ENCODE measurements at regions of chr3 and their contacts with region 1.

Region 1: GRCh38 chr3:175238801-175239200 is 379.7 kb downstream of the NAALADL2 start:
- DNase-seq: no peak
- CTCF ChIP-seq: no peak

Region 2: DNA sequence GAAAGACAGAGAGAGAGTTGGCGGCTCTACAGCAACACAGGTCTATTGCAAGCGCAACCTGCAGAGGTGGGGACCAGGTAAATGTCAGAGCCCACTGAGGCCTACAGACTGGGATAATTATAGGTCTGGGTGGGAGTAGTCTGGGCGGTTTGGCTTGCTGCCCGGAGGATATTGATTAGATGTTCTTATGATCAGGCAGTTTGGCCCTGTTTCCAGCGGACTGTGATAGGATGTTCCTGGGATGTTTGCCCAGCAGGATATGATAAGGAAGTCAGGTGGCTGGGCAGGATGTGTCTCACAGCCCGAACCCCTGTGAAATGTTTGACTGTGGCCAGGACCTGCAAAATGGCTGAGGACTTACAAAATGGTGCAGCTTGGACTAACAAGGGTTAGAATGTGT is 14.8 kb before region 1 on chr3:
- CTCF ChIA-PET with region 1: interaction called, 12 read pairs
- POLR2A ChIA-PET with region 1: no interaction called
- DNase-seq: no peak
- CTCF ChIP-seq: no peak

Region 3: GRCh38 chr3:175255698-175256097 is 16.9 kb after region 1 on chr3:
- CTCF ChIA-PET with region 1: no interaction called
- POLR2A ChIA-PET with region 1: no interaction called
- DNase-seq: no peak
- CTCF ChIP-seq: no peak

Region 4: DNA sequence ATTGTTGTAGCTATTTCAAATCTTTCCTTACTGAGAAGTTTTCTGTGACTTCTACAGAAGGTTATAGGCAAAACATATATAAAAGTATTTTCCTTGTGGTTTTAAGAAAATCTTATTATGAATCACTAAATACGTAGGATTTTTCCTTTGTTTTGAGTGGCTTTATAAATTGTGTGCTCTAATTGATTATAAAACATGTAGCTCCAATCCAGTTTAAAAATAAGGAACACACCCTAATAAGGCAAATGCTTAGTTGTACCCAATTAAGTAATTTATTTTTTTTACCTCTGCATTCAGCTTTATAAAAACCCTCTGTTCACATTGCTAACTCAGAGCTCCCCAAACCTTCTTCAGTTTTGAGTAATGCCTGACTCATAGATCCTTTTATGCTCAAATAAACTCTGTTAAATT is 28.3 kb after region 1 on chr3:
- CTCF ChIA-PET with region 1: no interaction called
- POLR2A ChIA-PET with region 1: no interaction called
- DNase-seq: no peak
- CTCF ChIP-seq: no peak